ENCODE measurements at regions of chr11 and their contacts with region 1.

Region 1: GRCh38 chr11:72553706-72554105 is 119.4 kb upstream of the CLPB start:
- DNase-seq: peak; percentile 61
- H3K4me3 Mint-ChIP-seq: no peak overlapping the region
- H3K27ac Mint-ChIP-seq: no peak overlapping the region
- H3K4me1 Mint-ChIP-seq: peaks cover 9% of the 10 kb centered on the region
- H3K27me3 Mint-ChIP-seq: peaks cover 33% of the 10 kb centered on the region

Region 2: DNA sequence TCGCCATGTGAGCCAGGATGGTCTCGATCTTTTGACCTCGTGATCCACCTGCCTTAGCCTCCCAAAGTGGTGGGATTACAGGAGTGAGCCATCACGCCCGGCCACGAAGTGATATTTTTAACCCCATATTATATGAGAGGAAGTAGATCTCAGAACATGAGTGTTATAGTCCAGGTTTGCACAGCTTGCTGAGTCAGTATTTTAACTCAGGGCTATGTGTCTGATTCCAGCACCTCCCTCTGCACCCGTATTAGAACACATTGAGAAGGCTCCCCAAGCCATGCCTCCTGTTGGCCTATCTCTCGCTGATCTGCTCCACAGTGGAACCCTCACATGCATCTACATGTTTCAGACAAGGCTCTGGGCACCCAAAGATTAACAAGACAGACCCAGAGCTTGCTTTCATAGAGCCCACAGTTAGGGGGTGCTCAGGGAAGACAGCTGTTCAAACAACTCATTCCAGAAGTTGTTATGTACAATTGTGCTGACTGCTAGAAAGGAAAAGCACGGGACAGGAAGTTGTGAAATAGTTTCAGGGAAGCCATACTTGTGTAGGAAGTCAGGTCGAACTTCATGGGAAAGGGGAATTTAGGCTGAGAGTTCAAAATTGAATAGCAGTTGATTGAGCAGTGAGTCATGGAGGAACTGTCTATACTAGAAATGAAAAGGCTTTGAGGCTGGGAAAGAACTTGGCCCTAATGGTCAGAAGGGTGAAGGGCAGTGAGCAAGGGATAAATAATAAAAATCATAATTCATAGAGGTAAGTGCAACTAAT is 70.1 kb before region 1 on chr11:
- CTCF ChIA-PET with region 1: interaction called, 14 read pairs
- DNase-seq: no peak
- H3K4me3 Mint-ChIP-seq: no peak overlapping the region
- H3K27ac Mint-ChIP-seq: no peak overlapping the region
- H3K4me1 Mint-ChIP-seq: peaks cover 15% of the 10 kb centered on the region
- H3K27me3 Mint-ChIP-seq: peaks cover 9% of the 10 kb centered on the region

Region 3: GRCh38 chr11:72696866-72697700 is 143.4 kb after region 1 on chr11:
- CTCF ChIA-PET with region 1: no interaction called
- DNase-seq: no peak
- H3K4me3 Mint-ChIP-seq: no peak overlapping the region
- H3K27ac Mint-ChIP-seq: no peak overlapping the region
- H3K4me1 Mint-ChIP-seq: no peaks in the 10 kb centered on the region
- H3K27me3 Mint-ChIP-seq: no peaks in the 10 kb centered on the region

Region 4: GRCh38 chr11:73028611-73029010 is 474.9 kb after region 1 on chr11:
- CTCF ChIA-PET with region 1: no interaction called
- DNase-seq: no peak
- H3K4me3 Mint-ChIP-seq: no peak overlapping the region
- H3K27ac Mint-ChIP-seq: no peak overlapping the region
- H3K4me1 Mint-ChIP-seq: peaks cover 19% of the 10 kb centered on the region
- H3K27me3 Mint-ChIP-seq: no peaks in the 10 kb centered on the region